ENCODE measurements at regions of chr4 and their contacts with region 1.

Region 1: DNA sequence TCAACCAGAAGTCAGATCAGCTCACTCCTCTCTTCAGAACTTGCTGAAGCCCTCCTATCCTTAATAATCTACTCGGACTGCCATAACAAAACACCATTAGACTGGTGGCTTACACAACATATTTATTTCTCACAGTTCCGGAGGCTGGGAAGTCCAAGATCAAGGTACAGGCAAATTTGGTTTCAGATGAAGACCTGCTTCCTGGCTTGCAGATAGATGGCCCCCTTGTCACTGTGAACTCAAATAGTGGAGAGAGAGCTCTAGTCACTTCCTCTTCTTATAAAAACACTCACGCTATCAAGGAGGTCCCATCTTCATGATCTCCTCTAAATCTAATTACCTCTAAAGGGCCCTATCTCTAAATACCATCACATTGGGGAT is 125.1 kb downstream of the CAMK2D start:
- DNase-seq: no peak

Region 2: DNA sequence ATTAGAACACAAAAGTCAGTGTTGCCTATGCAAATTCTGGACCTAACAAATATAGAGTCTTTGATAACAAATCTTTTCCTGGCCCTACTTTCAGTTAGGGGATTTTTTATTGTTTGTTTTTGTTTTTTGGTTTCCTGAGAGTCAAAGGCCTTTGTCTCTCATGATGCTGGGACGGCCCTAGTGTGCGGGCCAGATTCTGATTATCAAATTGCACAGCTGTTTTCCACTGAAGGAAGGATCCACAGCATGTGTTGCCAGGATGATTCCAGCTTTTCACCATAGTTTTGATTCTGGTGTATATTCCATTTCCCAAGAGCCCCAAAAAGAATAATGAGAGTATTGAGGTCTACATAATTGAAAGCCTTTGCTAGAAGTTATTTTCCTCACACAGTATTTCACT is 123.0 kb before region 1 on chr4:
- intact Hi-C with region 1: no loop called
- DNase-seq: no peak

Region 3: GRCh38 chr4:113547487-113548042 is 88.9 kb before region 1 on chr4:
- intact Hi-C with region 1: loop called (anchors 5 kb)
- DNase-seq: peak; percentile 91

Measured in cardiac septum (tissue), 1 donor.